Mammary epithelial cell (primary cell): ENCODE measurements at regions of chr1 and their contacts with region 1.

Region 1: GRCh38 chr1:27010989-27011764 is 1.5 kb downstream of the TENT5B start:
- DNase-seq: peak; percentile 91
- H3K4me3 ChIP-seq: peak overlapping the region; percentile 40 to 82 (median 61)
- H3K27ac ChIP-seq: peak overlapping the region; percentile 88
- H3K4me1 ChIP-seq: peaks cover 57% of the 10 kb centered on the region
- H3K27me3 ChIP-seq: no peaks in the 10 kb centered on the region
- CTCF ChIP-seq: no peak

Region 2: GRCh38 chr1:27031235-27032118 is 20.3 kb after region 1 on chr1:
- CTCF ChIA-PET with region 1: interaction called, 10 read pairs
- dilution Hi-C with region 1: no loop called
- in situ Hi-C with region 1: no loop called
- intact Hi-C with region 1: loop called (anchors 1 kb)
- DNase-seq: peak; percentile 86
- H3K4me3 ChIP-seq: peak overlapping the region; percentile 20 to 46 (median 44)
- H3K27ac ChIP-seq: peak overlapping the region; percentile 73
- H3K4me1 ChIP-seq: peaks cover 29% of the 10 kb centered on the region
- H3K27me3 ChIP-seq: no peaks in the 10 kb centered on the region
- CTCF ChIP-seq: peak in 1 of 2 donors; percentile 15

Region 3: DNA sequence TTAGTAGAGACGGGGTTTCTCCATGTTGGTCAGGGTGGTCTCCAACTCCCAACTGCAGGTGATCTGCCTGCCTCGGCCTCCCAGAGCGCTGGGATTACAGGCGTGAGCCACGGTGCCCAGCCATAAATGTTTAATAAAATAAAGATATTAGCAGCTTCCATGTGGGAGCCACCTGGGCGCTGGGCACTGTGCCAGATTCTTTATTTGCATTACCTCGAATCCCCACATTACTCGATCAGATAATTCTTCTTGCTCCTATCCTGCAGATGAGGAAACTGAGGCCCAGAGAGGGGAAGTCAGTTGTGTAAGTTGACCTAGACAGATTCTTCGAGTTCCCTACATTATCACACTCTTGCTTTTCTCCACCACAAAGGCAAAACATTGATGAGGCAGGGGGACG is 26.3 kb after region 1 on chr1:
- CTCF ChIA-PET with region 1: interaction called, 10 read pairs
- dilution Hi-C with region 1: no loop called
- in situ Hi-C with region 1: no loop called
- intact Hi-C with region 1: no loop called
- DNase-seq: no peak
- H3K4me3 ChIP-seq: no peak overlapping the region
- H3K27ac ChIP-seq: no peak overlapping the region
- H3K4me1 ChIP-seq: peaks cover 11% of the 10 kb centered on the region
- H3K27me3 ChIP-seq: no peaks in the 10 kb centered on the region
- CTCF ChIP-seq: no peak

Region 4: GRCh38 chr1:27071049-27071416 is 59.9 kb after region 1 on chr1:
- CTCF ChIA-PET with region 1: no interaction called
- dilution Hi-C with region 1: no loop called
- in situ Hi-C with region 1: no loop called
- intact Hi-C with region 1: no loop called
- DNase-seq: peak; percentile 76
- H3K4me3 ChIP-seq: peak overlapping the region in 1 of 3 experiments; percentile 19
- H3K27ac ChIP-seq: no peak overlapping the region
- H3K4me1 ChIP-seq: peaks cover 15% of the 10 kb centered on the region
- H3K27me3 ChIP-seq: no peaks in the 10 kb centered on the region
- CTCF ChIP-seq: no peak